Activated CD8-positive, alpha-beta T cell treated with anti-CD3 and anti-CD28 coated beads for 36 hours (primary cell): ENCODE measurements at regions of chr3 and their contacts with region 1.

Region 1: DNA sequence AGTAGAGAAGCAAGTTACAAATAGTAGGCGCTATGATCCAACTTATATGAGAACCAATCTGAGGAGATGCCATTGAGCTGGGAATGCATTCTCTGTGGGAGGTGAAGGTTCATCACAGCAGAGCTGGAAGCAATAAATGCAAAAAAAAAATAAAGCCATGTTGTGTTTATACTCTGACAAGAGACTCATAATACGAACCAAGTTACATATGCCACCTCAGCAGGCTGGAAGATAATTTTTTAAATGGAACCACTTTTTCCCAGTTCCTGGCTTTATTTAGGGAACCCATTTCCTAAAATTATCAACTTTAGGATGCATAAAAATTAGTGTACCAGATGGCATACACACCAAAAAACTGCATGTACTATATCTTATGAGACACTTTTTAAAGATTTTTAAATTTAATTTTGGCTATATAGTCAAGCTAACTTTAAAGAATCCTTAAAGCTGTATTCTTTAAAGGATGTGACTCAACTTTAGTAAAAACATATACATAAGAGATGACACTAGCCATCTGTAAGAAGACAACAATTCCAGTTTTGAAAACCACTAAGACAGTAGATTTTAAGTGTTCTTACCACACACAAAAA is 23.6 kb upstream of the SETMAR start:
- DNase-seq: no peak
- ATAC-seq: no peak
- H3K4me3 Mint-ChIP-seq: no peak overlapping the region
- H3K27ac Mint-ChIP-seq: no peak overlapping the region
- H3K4me1 Mint-ChIP-seq: no peaks in the 10 kb centered on the region
- H3K27me3 Mint-ChIP-seq: no peaks in the 10 kb centered on the region
- CTCF ChIP-seq: no peak

Region 2: GRCh38 chr3:4290272-4290893 is 10.8 kb after region 1 on chr3:
- CTCF ChIA-PET with region 1: interaction called, 21 read pairs
- POLR2A ChIA-PET with region 1: no interaction called
- intact Hi-C with region 1: no loop called
- DNase-seq: peak; percentile 63
- ATAC-seq: peak; percentile 88
- H3K4me3 Mint-ChIP-seq: no peak overlapping the region
- H3K27ac Mint-ChIP-seq: no peak overlapping the region
- H3K4me1 Mint-ChIP-seq: peaks cover 13% of the 10 kb centered on the region
- H3K27me3 Mint-ChIP-seq: no peaks in the 10 kb centered on the region
- CTCF ChIP-seq: peak; percentile 94